ENCODE measurements at regions of chr5 and their contacts with region 1.

Region 1: GRCh38 chr5:28945859-28946258 is 1907.5 kb upstream of the CDH9 start:
- DNase-seq: no peak

Region 2: DNA sequence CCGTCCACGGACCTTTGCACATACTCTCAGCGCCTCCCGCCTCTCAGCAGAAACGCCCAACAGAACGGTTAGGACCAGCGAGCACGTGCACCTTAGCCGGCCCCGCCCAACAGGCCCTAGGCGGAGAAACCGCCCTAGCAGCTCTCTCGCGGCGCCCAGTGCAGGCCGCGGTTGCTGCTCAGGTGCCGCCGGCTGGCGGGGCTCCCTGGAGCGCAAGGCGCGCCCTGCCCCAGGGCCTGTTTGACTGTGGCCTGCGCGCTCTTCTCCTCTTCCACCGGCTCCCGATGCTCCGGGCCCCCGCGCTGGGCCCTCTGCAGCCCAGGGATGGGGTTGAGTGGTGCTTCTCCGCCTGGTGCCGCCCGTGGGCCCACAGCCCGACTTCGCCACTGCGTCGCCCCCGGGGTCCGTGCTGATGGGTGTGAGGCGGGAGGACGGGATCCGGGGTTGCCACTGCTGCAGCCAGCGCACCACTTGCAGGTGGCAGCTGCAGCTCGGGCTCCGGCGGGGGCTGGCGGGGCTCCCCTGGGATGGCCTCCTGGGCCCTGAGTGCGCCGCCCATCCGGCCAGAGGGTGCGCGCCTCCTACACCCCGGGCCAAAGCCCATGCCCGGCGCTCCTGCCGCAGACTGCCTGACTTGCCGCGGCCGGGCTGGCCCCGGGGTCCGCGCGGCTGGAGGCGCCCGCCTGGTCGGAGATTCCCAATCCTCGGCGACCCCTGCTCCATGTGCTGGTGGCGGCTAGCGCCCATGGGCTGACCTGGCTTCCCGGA is 18.1 kb before region 1 on chr5:
- intact Hi-C with region 1: no loop called
- DNase-seq: peak; percentile 73

Region 3: DNA sequence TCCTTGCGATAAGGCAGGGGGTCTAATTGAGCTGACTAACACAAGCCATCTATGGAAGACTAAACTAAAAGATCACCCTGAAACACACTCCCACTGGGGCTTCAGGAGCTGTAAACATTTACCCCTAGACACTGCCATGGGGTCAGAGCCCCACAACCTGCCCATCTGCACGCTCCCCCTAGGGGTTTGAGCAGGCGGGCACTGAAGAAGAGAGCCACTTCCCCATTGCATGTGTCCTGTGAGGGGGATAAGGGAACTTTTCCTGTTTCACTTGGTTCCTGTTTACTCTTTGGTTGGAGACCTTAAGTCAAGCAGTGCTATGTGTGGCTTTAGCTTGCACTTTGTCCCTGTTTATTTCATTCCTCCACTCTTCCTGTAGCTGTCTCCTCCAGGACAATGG is 22.0 kb after region 1 on chr5:
- intact Hi-C with region 1: loop called in 1 of 2 experiments (anchors 1 kb)
- DNase-seq: no peak